Breast epithelium (tissue), 4 donors: ENCODE measurements at regions of chr9 and their contacts with region 1.

Region 1: GRCh38 chr9:108708448-108708847 is 147.3 kb downstream of the ACTL7B start:
- DNase-seq: no peak
- H3K4me3 ChIP-seq: no peak overlapping the region
- H3K27ac ChIP-seq: no peak overlapping the region
- H3K4me1 ChIP-seq: no peaks in the 10 kb centered on the region
- H3K27me3 ChIP-seq: no peaks in the 10 kb centered on the region
- CTCF ChIP-seq: no peak
- POLR2A ChIP-seq: no peak

Region 2: DNA sequence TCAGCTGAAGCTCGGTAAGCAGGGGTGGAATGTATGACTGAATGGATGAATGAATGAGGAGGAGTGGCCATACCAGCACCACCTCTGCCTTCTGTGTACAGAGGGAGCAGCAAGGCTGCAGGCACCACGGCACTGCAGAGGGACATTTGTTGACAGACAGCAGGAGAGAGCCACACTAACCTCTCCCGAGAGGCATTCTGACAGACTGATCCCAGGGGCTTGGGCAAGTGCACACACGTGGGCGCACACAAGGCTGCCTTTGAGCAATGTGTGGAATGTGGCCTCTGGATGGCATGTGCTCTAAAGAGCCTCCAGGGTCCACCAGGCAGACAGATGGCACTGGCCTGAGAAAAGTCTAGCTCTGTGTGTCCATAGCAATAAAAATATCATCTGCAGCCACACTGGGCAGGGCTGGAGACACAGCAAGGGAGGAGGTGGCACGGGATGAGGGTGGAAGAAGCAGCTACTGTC is 35.5 kb after region 1 on chr9:
- intact Hi-C with region 1: no loop called
- DNase-seq: peak in 1 of 2 donors; percentile 59
- H3K4me3 ChIP-seq: no peak overlapping the region
- H3K27ac ChIP-seq: no peak overlapping the region
- H3K4me1 ChIP-seq: no peaks in the 10 kb centered on the region
- H3K27me3 ChIP-seq: no peaks in the 10 kb centered on the region
- CTCF ChIP-seq: no peak
- POLR2A ChIP-seq: no peak

Region 3: DNA sequence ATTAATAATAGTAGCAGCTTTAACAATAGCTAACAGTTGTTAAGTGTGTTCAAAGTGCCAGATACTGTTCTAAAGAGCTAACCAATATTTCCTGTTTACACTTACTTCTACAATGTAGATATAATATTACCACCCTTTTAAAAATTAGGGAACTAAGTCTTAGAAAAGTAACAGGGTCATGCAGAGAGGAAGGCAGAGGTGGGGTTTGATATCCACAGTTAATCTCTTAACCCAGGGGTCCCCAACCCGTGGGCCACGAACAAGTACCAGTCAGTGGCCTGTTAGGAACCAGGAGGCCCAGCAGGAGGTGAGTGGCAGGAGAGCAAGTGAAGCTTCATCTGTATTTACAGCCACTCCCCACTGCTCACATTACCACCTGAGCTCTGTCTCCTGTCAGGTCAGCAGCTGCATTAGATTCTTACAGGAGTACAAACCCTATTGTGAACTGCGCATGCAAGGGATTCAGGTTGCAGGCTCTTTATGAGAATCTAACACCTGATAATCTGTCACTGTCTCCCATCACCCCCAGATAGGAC is 58.2 kb after region 1 on chr9:
- intact Hi-C with region 1: loop called (anchors 2 kb)
- DNase-seq: no peak
- H3K4me3 ChIP-seq: no peak overlapping the region
- H3K27ac ChIP-seq: no peak overlapping the region
- H3K4me1 ChIP-seq: no peaks in the 10 kb centered on the region
- H3K27me3 ChIP-seq: no peaks in the 10 kb centered on the region
- CTCF ChIP-seq: no peak
- POLR2A ChIP-seq: no peak